Gastrocnemius medialis (tissue), 4 donors: ENCODE measurements at regions of chr9 and their contacts with region 1.

Region 1: DNA sequence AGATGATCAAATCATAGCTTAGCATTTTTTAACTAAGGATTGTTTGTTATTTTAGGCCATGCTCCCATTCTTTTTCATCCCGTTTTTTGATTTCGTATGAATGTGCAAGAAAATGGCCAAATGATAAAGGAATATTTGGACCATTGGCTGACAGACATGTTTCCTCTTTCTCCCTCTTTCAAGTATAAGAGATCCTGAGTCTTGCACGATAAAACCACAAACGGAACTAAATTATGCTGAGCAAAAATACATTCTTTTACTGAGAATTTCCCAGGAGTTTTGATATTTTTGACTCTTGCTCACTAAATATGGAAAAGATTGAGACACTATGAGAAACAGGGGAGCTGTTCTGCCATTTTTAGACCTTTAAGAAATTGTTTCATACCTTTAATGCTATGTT is 90.4 kb upstream of the KLF9 start:
- DNase-seq: no peak
- ATAC-seq: no peak
- H3K4me3 ChIP-seq: no peak overlapping the region
- H3K27ac ChIP-seq: peak overlapping the region in 3 of 4 donors; percentile 6 to 57 (median 51)
- H3K4me1 ChIP-seq: peaks cover 21 to 35% of the 10 kb centered on the region in 2 donors
- H3K27me3 ChIP-seq: no peaks in the 10 kb centered on the region
- CTCF ChIP-seq: no peak
- POLR2A ChIP-seq: no peak

Region 2: GRCh38 chr9:70587201-70587600 is 82.4 kb after region 1 on chr9:
- in situ Hi-C with region 1: loop called in 1 of 4 experiments (anchors 10 kb)
- intact Hi-C with region 1: no loop called
- DNase-seq: peak; percentile 47 to 53
- ATAC-seq: peak; percentile 92 to 94
- H3K4me3 ChIP-seq: no peak overlapping the region
- H3K27ac ChIP-seq: peak overlapping the region; percentile 82 to 89 (median 84)
- H3K4me1 ChIP-seq: peaks cover 37 to 46% of the 10 kb centered on the region in 2 donors
- H3K27me3 ChIP-seq: no peaks in the 10 kb centered on the region
- CTCF ChIP-seq: no peak
- POLR2A ChIP-seq: no peak

Region 3: GRCh38 chr9:71121275-71122021 is 616.6 kb after region 1 on chr9 and contains the start of gene TRPM3:
- in situ Hi-C with region 1: no loop called
- intact Hi-C with region 1: no loop called
- DNase-seq: no peak
- ATAC-seq: no peak
- H3K4me3 ChIP-seq: no peak within 1 kb of the TSS
- H3K27ac ChIP-seq: no peak within 1 kb of the TSS
- H3K4me1 ChIP-seq: no peaks in the 10 kb centered on the region
- H3K27me3 ChIP-seq: peaks cover 5 to 24% (median 6%) of the 10 kb centered on the region in 3 donors
- CTCF ChIP-seq: no peak
- POLR2A ChIP-seq: no peak
- total RNA-seq, gene TRPM3: 0.07 to 0.66 TPM in 2 of 4 donors, not detected in the others